WTC11 (cell line): ENCODE measurements at regions of chr1 and their contacts with region 1.

Region 1: DNA sequence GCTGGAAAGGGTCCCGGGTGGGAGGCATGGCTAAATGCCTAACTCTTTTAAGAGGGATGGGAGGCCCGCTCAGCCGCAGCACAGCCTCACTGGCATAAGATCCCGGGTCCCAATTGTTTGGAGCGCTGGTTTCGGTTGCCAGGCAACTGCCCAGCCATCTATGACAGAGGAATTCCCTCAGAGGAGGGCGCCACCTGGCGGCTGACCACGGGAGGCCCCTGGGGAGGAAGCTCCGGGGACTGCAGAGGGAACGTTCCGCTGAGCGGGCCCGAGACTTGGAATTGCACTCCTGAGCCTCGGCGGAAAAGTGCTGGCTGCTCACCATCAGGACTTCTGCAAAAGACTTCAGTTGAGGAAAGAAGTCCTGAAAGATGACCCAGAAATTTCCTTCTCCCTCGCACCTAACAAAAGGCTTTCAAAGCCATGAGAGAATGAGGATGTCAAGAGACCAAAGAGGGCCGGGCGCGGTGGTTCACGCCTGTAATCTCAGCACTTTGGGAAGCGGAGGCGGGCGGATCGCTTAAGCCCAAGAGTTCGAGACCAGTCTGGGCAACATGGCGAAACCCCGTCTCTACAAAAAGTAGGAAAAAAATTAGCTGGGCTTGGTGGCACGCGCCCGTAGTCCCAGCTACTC is 1.1 kb upstream of the ELAPOR1 start:
- DNase-seq: peak; percentile 100
- ATAC-seq: peak; percentile 85
- H3K4me3 Mint-ChIP-seq: peak overlapping the region; percentile 79
- H3K27ac Mint-ChIP-seq: no peak overlapping the region
- H3K4me1 Mint-ChIP-seq: peaks cover 10% of the 10 kb centered on the region
- H3K27me3 Mint-ChIP-seq: peaks cover 82% of the 10 kb centered on the region
- CTCF ChIP-seq: peak; percentile 96

Region 2: GRCh38 chr1:108816049-108816893 is 296.5 kb before region 1 on chr1:
- CTCF ChIA-PET with region 1: interaction called, 11 read pairs
- POLR2A ChIA-PET with region 1: no interaction called
- DNase-seq: peak; percentile 32
- ATAC-seq: peak; percentile 70
- H3K4me3 Mint-ChIP-seq: peak overlapping the region; percentile 3; the same call in 1 of the 2 replicates
- H3K27ac Mint-ChIP-seq: peak overlapping the region; percentile 52
- H3K4me1 Mint-ChIP-seq: peaks cover 35% of the 10 kb centered on the region
- H3K27me3 Mint-ChIP-seq: no peaks in the 10 kb centered on the region
- CTCF ChIP-seq: no peak

Region 3: DNA sequence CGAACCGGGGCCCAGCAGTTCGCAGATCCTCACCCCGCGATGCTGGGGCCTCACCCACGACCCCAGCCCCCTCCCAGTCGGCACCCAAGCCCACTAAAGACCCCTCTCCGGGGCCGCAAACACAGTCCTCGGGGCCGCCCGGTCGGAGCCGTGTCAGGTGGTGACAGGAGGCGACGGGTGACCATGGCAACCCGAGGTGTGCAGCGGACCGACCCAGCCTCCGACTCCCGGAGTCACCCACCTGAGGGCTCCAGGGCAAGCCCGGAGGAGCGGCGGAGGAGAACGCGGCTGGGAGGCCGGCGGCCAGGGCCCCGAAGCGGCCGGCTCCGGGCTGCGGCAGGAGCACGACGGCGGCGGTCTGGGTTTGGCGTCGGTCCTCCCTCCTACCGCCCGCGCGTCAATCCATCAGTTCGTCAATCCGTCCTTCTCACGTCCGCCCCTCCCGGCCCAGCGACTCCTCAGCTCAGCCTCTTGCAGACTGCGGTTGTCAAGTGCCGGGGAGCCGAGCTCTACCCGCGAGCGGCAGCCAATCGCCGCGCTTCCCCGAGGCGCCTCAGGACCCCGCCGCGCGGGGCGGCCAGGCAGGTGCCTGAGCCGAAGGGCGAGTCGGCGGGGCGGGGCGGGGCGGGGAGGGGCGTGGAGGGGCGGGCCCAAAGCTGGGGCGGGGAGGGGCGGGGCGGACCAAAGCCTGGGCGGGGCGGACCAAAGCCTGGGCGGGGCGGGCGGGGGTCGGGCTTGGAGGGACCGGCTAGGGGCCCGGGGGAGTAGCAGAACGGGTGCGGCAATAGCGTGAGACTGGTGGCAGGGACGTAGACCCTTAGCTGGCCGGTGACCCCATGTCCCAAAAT is 70.9 kb before region 1 on chr1 and contains the start of gene WDR47:
- CTCF ChIA-PET with region 1: interaction called, 10 read pairs
- POLR2A ChIA-PET with region 1: interaction called, 3 read pairs
- DNase-seq: peak; percentile 94
- ATAC-seq: peak; percentile 96
- H3K4me3 Mint-ChIP-seq: peak within 1 kb of the TSS; percentile 86
- H3K27ac Mint-ChIP-seq: no peak within 1 kb of the TSS; the same call in 1 of the 2 replicates
- H3K4me1 Mint-ChIP-seq: peaks cover 12% of the 10 kb centered on the region
- H3K27me3 Mint-ChIP-seq: no peaks in the 10 kb centered on the region; the same call in 1 of the 2 replicates
- CTCF ChIP-seq: no peak
- total RNA-seq, gene WDR47: 6.9 to 8.0 TPM (median 7.0 TPM) in 3 replicates

Region 4: DNA sequence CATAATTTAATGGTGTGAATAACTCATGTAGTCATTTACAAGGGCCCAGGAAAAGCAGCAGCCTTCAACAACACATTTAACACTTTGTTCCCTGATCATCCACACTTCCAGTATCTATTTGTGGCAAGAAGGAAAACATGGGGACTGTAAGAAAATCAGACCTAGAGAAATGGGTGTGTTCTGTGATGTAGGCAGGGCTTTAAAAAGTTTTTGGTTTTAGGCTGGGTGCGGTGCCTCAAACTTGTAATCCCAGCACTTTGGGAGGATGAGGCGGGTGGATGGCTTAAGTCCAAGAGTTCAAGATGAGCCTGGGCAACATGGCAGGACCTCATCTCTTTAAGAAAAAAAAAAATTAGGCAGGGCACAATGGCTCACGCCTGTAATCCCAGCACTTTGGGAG is 56.7 kb before region 1 on chr1:
- CTCF ChIA-PET with region 1: no interaction called
- POLR2A ChIA-PET with region 1: no interaction called
- DNase-seq: no peak
- ATAC-seq: no peak
- H3K4me3 Mint-ChIP-seq: no peak overlapping the region
- H3K27ac Mint-ChIP-seq: no peak overlapping the region
- H3K4me1 Mint-ChIP-seq: no peaks in the 10 kb centered on the region
- H3K27me3 Mint-ChIP-seq: peaks cover 3% of the 10 kb centered on the region; the same call in 1 of the 2 replicates
- CTCF ChIP-seq: no peak

Region 5: GRCh38 chr1:109099938-109100773 is 12.6 kb before region 1 on chr1:
- CTCF ChIA-PET with region 1: interaction called, 58 read pairs
- POLR2A ChIA-PET with region 1: interaction called, 13 read pairs
- DNase-seq: peak; percentile 96
- ATAC-seq: peak; percentile 95
- H3K4me3 Mint-ChIP-seq: peak overlapping the region; percentile 98
- H3K27ac Mint-ChIP-seq: peak overlapping the region; percentile 98
- H3K4me1 Mint-ChIP-seq: 0 out of 2 replicates have a peak, but pooled peaks cover 3% of the 10 kb centered on the region
- H3K27me3 Mint-ChIP-seq: peaks cover under 1% of the 10 kb centered on the region
- CTCF ChIP-seq: no peak

Region 6: GRCh38 chr1:109142260-109142659 is 29.5 kb after region 1 on chr1:
- CTCF ChIA-PET with region 1: no interaction called
- POLR2A ChIA-PET with region 1: no interaction called
- DNase-seq: no peak
- ATAC-seq: no peak
- H3K4me3 Mint-ChIP-seq: no peak overlapping the region
- H3K27ac Mint-ChIP-seq: no peak overlapping the region
- H3K4me1 Mint-ChIP-seq: no peaks in the 10 kb centered on the region
- H3K27me3 Mint-ChIP-seq: no peaks in the 10 kb centered on the region; the same call in 1 of the 2 replicates
- CTCF ChIP-seq: no peak